ENCODE measurements at regions of chr5 and their contacts with region 1.

Region 1: GRCh38 chr5:154811653-154812365 is 38.6 kb downstream of the FAXDC2 start:
- DNase-seq: peak in 4 of 5 donors; percentile 47 to 59 (median 56)
- ATAC-seq: peak; percentile 16 to 70 (median 62)
- H3K4me3 ChIP-seq: no peak overlapping the region
- H3K27ac ChIP-seq: peak overlapping the region in 2 of 12 donors; percentile 29 to 32
- H3K4me1 ChIP-seq: peaks cover 0 to 9% (median 0%) of the 10 kb centered on the region in 12 donors
- H3K27me3 ChIP-seq: no peaks in the 10 kb centered on the region
- CTCF ChIP-seq: peak; percentile 80 to 94 (median 89)
- POLR2A ChIP-seq: no peak

Region 2: GRCh38 chr5:154647114-154647760 is 164.6 kb before region 1 on chr5:
- intact Hi-C with region 1: loop called (anchors 1 to 5 kb)
- DNase-seq: peak in 4 of 5 donors; percentile 24 to 75 (median 50)
- ATAC-seq: peak; percentile 32 to 80 (median 58)
- H3K4me3 ChIP-seq: peak overlapping the region in 11 of 12 donors; percentile 0 to 56 (median 39)
- H3K27ac ChIP-seq: no peak overlapping the region
- H3K4me1 ChIP-seq: peaks cover 0 to 14% (median 6%) of the 10 kb centered on the region in 12 donors
- H3K27me3 ChIP-seq: peaks cover 0 to 4% (median 0%) of the 10 kb centered on the region in 9 donors
- CTCF ChIP-seq: no peak
- POLR2A ChIP-seq: no peak

Region 3: DNA sequence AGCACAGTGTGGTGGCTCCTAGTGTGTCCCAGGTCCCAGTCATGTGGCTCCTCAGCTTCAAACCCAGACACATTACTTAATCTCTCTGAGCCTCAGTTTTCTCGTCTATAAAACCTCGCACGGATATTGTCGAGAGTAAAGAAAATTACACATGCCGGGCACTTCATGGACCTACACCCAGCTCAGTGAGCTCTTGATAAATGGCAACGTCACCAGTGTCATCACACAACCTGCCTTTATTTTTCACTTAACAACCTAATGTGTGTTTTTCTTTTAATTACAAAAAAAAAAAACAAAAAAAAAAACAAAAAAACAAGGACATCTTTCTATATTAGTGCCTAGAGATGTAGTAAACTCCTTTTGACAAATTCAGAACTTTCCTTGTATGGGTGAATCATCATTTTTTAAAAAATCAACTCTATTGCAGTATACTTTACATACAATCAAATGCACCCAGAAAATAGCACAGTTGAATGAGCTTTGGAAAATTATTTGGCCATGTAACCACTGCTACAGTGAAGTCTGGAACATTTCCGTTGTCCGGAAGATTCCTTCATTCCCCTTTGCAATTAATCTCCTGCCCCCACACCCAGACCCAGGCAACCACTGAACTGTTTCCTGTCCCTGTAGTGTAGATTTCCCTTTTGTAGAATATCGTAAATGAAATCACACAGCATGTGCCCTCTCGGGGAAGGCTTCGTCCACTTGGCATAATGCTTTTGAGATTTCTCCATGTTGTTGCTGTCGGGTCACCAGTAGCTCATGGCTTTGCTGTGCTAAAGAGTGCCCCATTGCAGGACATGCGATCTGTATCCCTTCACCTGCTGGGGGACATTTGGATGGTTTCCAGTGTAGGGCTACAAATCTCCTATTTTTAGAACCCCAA is 157.1 kb before region 1 on chr5:
- intact Hi-C with region 1: loop called (anchors 1 to 5 kb)
- DNase-seq: no peak
- ATAC-seq: peak in 3 of 4 donors; percentile 30 to 54 (median 46)
- H3K4me3 ChIP-seq: peak overlapping the region in 8 of 12 donors; percentile 3 to 31 (median 13)
- H3K27ac ChIP-seq: peak overlapping the region in 10 of 12 donors; percentile 9 to 69 (median 42)
- H3K4me1 ChIP-seq: peaks cover 0 to 23% (median 16%) of the 10 kb centered on the region in 12 donors
- H3K27me3 ChIP-seq: no peaks in the 10 kb centered on the region
- CTCF ChIP-seq: no peak
- POLR2A ChIP-seq: no peak

Region 4: GRCh38 chr5:154899151-154899816 is 87.5 kb after region 1 on chr5:
- intact Hi-C with region 1: loop called in 1 of 10 experiments (anchors 10 kb)
- DNase-seq: no peak
- ATAC-seq: peak in 1 of 4 donors; percentile 42
- H3K4me3 ChIP-seq: no peak overlapping the region
- H3K27ac ChIP-seq: peak overlapping the region in 1 of 12 donors; percentile 38
- H3K4me1 ChIP-seq: no peaks in the 10 kb centered on the region
- H3K27me3 ChIP-seq: no peaks in the 10 kb centered on the region
- CTCF ChIP-seq: no peak
- POLR2A ChIP-seq: no peak